ENCODE measurements at regions of chr2 and their contacts with region 1.

Region 1: DNA sequence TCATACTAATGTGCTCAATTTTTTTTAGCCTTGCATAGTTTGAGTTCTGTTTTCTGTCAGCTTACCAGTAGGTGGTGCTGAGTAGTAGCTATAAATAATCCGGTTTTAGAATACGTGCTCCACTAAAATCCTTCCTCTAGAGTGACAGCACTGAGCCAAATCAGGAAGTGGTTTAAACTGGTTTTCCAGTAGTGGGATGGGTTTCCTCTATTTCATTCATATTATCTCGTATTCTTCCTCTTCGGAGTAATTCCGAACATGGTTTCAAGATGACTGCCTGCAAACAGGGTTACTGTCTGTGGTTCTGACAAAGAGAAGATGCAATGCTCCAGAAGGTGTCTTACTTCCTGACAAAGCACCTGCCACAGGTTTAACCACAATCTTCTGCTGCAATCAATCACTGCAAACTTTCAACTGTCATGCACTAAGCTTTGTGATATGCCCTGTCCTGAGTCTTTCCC is 496.9 kb upstream of the VRK2 start:
- ATAC-seq: peak in 3 of 8 experiments; percentile 68 to 77 (median 71)
- H3K4me3 ChIP-seq: no peak overlapping the region
- H3K27ac ChIP-seq: no peak overlapping the region
- H3K4me1 ChIP-seq: peaks cover 1 to 7% of the 10 kb centered on the region in 2 donors

Region 2: GRCh38 chr2:57696016-57696415 is 146.3 kb after region 1 on chr2:
- in situ Hi-C with region 1: loop called in 2 of 9 experiments (anchors 25 kb)
- ATAC-seq: peak in 5 of 8 experiments; percentile 20 to 97 (median 86)
- H3K4me3 ChIP-seq: no peak overlapping the region
- H3K27ac ChIP-seq: no peak overlapping the region
- H3K4me1 ChIP-seq: no peaks in the 10 kb centered on the region

Region 3: GRCh38 chr2:57720728-57721627 is 171.3 kb after region 1 on chr2:
- in situ Hi-C with region 1: loop called in 1 of 9 experiments (anchors 25 kb)
- ATAC-seq: peak; percentile 92 to 99 (median 98)
- H3K4me3 ChIP-seq: no peak overlapping the region
- H3K27ac ChIP-seq: no peak overlapping the region
- H3K4me1 ChIP-seq: peaks cover 5 to 11% of the 10 kb centered on the region in 2 donors

Measured in motor neuron (in vitro differentiated cells).